ENCODE measurements at regions of chr11 and their contacts with region 1.

Region 1: GRCh38 chr11:119666463-119667131 is 62.4 kb downstream of the NECTIN1 start:
- DNase-seq: no peak
- H3K4me3 ChIP-seq: no peak overlapping the region
- H3K27ac ChIP-seq: peak overlapping the region; percentile 58 to 77 (median 62)
- H3K4me1 ChIP-seq: peaks cover 22 to 68% (median 22%) of the 10 kb centered on the region in 3 donors
- H3K27me3 ChIP-seq: no peaks in the 10 kb centered on the region
- CTCF ChIP-seq: peak; percentile 63 to 97 (median 91)
- POLR2A ChIP-seq: no peak

Region 2: DNA sequence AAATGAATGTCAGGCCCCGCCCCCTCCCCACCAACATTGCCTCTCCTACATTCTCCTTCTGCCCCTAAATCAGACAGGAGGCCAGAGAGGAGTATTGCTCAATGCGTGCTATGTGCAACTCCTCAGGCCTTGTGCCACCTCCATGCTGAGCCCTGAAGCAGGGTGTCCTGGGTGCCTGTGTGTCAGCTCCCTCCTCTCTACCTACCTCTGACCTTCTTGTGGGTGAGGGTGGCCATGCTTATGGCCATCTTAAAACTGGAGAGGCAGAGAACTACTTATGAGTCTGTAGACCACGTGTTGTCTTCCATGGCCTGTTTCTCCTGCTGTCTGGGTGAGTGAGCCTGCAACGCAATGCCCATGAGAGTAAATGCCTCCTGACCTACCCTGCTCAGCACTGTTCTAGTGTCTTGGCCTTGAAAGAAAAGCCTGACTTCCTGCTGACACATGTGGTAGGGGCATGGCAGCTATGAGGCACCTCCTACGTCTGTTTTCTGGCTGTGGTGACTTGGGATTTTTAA is 360.2 kb before region 1 on chr11:
- intact Hi-C with region 1: no loop called
- DNase-seq: no peak
- H3K4me3 ChIP-seq: no peak overlapping the region
- H3K27ac ChIP-seq: peak overlapping the region; percentile 46 to 78 (median 73)
- H3K4me1 ChIP-seq: peaks cover 6 to 45% (median 20%) of the 10 kb centered on the region in 3 donors
- H3K27me3 ChIP-seq: no peaks in the 10 kb centered on the region
- CTCF ChIP-seq: no peak
- POLR2A ChIP-seq: no peak

Region 3: DNA sequence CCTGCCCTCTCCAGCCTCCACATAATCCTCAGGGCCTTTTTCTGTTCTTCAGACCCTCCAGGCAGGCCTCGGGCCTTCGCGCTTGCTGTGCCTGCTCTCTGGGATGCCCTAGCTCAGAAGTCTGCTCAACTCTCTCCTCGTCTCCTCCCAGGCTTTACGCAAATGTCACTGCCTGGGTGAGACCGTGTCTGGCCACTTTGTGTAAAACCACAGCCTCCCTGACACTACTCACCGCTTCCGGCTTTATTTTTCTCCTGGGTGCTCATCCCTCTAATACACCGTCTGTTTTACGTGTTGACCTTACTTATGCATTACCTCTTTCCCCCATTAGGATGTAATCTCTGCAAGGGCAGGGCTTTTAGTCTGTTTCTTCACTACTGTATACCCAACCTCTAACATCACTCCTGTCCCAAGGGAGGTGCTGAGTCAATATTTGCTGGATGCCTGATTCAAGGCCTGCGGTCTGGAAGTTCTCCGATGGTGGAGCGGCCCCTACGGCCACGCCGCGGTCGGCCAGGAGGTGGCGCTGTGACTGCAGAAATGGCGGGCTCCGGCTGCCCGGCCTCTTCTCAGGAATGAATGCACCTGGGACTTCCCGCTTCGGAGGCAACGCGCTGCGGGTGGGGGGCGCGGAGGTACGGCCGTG is 185.5 kb before region 1 on chr11:
- intact Hi-C with region 1: loop called (anchors 5 kb)
- DNase-seq: no peak
- H3K4me3 ChIP-seq: peak overlapping the region in 1 of 4 donors; percentile 33
- H3K27ac ChIP-seq: no peak overlapping the region
- H3K4me1 ChIP-seq: peaks cover 0 to 12% (median 4%) of the 10 kb centered on the region in 3 donors
- H3K27me3 ChIP-seq: peaks cover 0 to 10% (median 0%) of the 10 kb centered on the region in 4 donors
- CTCF ChIP-seq: peak; percentile 85 to 99 (median 97)
- POLR2A ChIP-seq: no peak

Region 4: GRCh38 chr11:119728651-119729580 is 62.3 kb after region 1 on chr11 and contains the start of gene NECTIN1:
- intact Hi-C with region 1: loop called (anchors 5 kb)
- DNase-seq: peak; percentile 46
- H3K4me3 ChIP-seq: peak within 1 kb of the TSS; percentile 68 to 95 (median 86)
- H3K27ac ChIP-seq: peak within 1 kb of the TSS; percentile 93 to 98 (median 98)
- H3K4me1 ChIP-seq: peaks cover 12 to 58% (median 26%) of the 10 kb centered on the region in 3 donors
- H3K27me3 ChIP-seq: no peaks in the 10 kb centered on the region
- CTCF ChIP-seq: peak; percentile 78 to 96 (median 88)
- POLR2A ChIP-seq: peak in 3 of 4 donors; percentile 69 to 87 (median 84)
- total RNA-seq, gene NECTIN1: 72.5 to 163 (median 117) TPM

Region 5: DNA sequence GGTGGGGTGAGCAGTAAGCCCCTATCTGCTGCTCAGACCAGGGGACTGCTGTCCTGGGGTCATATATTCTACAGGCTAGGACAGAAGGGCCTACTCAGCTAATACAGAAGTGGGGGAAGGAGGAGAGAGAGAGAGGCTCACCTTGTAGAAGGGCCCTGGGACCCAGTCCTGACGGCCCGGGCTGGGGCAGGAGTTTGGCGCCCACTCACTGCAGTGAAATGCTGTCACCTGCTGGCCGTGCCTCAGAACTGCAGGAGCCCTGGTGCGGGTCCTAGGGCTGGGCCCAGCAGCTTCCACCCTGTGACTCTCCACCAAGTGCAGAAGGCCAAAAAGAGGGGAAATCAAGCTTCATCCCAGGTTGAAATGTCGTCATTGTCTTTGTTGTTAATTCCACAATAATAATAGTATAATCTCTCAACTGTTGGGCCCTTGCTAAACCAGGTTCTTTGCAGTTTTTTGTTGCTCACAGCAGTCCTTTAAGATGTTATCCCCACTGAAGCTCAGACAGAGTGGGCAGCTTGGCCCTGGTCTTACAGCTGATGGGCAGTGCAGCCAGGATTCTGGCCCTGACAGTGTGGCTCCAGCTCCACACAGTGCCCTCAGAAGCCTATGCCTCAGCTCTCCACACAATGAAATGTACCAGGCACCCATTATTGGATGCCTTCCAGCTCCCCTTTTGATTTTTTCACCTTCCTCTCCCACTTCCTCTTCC is 441.7 kb after region 1 on chr11:
- intact Hi-C with region 1: loop called (anchors 10 kb)
- DNase-seq: no peak
- H3K4me3 ChIP-seq: no peak overlapping the region
- H3K27ac ChIP-seq: peak overlapping the region; percentile 5 to 48 (median 32)
- H3K4me1 ChIP-seq: peaks cover 0 to 14% (median 0%) of the 10 kb centered on the region in 3 donors
- H3K27me3 ChIP-seq: peaks cover 0 to 28% (median 0%) of the 10 kb centered on the region in 4 donors
- CTCF ChIP-seq: peak; percentile 96 to 99 (median 99)
- POLR2A ChIP-seq: no peak

Measured in esophagus squamous epithelium (tissue), 5 donors.